H1 (cell line): ENCODE measurements at regions of chr17 and their contacts with region 1.

Region 1: DNA sequence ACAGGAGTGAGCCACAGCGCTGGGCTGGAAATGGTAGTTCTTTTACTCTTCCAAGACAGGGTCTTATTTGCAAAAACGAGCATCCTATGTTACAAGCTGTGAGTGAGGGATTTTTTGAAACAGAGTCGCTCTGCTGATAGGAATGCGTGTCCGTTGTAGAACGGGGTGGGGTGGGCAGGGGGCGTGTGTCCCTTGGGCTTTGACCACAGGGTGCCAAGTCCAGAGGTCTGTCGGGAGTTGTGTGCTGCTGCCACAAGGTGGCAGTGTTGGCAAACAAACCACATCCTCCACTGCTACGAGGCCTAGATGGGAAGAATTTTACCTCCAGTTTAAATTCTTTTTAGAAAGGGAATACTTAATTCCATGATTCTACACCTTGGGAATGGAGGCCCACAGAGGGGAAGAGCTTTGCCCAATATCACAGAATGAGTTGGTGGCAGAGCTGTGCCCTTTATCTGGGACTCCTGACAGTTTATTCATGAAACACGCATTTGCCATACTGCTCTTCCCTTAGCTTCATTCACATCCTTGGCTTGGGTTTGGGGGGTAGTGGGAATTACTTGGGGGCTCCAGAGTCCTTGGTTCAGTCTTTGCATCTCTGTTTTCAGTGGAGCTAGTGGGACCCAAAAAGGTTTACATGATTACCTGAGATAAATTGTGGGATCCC is 30.6 kb upstream of the ETV4 start:
- DNase-seq: peak; percentile 73 to 84
- H3K4me3 ChIP-seq: peak overlapping the region in 3 of 4 experiments; percentile 28 to 46 (median 37); a peak in 3 of 8 replicates
- H3K27ac ChIP-seq: no peak overlapping the region
- H3K4me1 ChIP-seq: peaks cover 6 to 21% (median 13%) of the 10 kb centered on the region in 4 experiments; a peak in 5 of 7 replicates
- H3K27me3 ChIP-seq: no peaks in the 10 kb centered on the region
- CTCF ChIP-seq: peak; percentile 86 to 97 (median 91)
- EP300 ChIP-seq: no peak
- POLR2A ChIP-seq: no peak
- RAD21 ChIP-seq: peak; percentile 99

Region 2: GRCh38 chr17:43530278-43531081 is 46.2 kb before region 1 on chr17:
- CTCF ChIA-PET with region 1: interaction called, 21 read pairs
- POLR2A ChIA-PET with region 1: interaction called, 7 read pairs
- DNase-seq: peak; percentile 93 to 99
- H3K4me3 ChIP-seq: peak overlapping the region; percentile 17 to 59 (median 40); a peak in 7 of 8 replicates
- H3K27ac ChIP-seq: peak overlapping the region; percentile 89
- H3K4me1 ChIP-seq: peaks cover 18 to 40% (median 22%) of the 10 kb centered on the region in 4 experiments
- H3K27me3 ChIP-seq: no peaks in the 10 kb centered on the region
- CTCF ChIP-seq: 0 out of 4 replicates have a peak, but pooled peaks of 1 of the 3 experiments have one; percentile 6
- EP300 ChIP-seq: peak in 1 of 2 experiments; percentile 94; a peak in 2 of 3 replicates
- POLR2A ChIP-seq: peak in 1 of 2 experiments; percentile 81; a peak in 2 of 3 replicates
- RAD21 ChIP-seq: peak; percentile 8 to 10; a peak in 1 of 4 replicates

Region 3: GRCh38 chr17:43556292-43556691 is 20.4 kb before region 1 on chr17:
- CTCF ChIA-PET with region 1: interaction called, 65 read pairs
- POLR2A ChIA-PET with region 1: interaction called, 3 read pairs
- DNase-seq: no peak
- H3K4me3 ChIP-seq: no peak overlapping the region
- H3K27ac ChIP-seq: no peak overlapping the region
- H3K4me1 ChIP-seq: peaks cover 5 to 20% (median 13%) of the 10 kb centered on the region in 4 experiments
- H3K27me3 ChIP-seq: no peaks in the 10 kb centered on the region; a peak in 2 of 7 replicates
- CTCF ChIP-seq: no peak
- EP300 ChIP-seq: no peak
- POLR2A ChIP-seq: no peak
- RAD21 ChIP-seq: no peak

Region 4: GRCh38 chr17:43591779-43592562 is 15.3 kb after region 1 on chr17:
- CTCF ChIA-PET with region 1: interaction called, 11 read pairs
- POLR2A ChIA-PET with region 1: interaction called, 3 read pairs
- DNase-seq: no peak
- H3K4me3 ChIP-seq: no peak overlapping the region
- H3K27ac ChIP-seq: no peak overlapping the region
- H3K4me1 ChIP-seq: peaks cover 0 to 4% (median 0%) of the 10 kb centered on the region in 4 experiments; a peak in 2 of 7 replicates
- H3K27me3 ChIP-seq: no peaks in the 10 kb centered on the region
- CTCF ChIP-seq: no peak
- EP300 ChIP-seq: no peak
- POLR2A ChIP-seq: no peak
- RAD21 ChIP-seq: no peak

Region 5: DNA sequence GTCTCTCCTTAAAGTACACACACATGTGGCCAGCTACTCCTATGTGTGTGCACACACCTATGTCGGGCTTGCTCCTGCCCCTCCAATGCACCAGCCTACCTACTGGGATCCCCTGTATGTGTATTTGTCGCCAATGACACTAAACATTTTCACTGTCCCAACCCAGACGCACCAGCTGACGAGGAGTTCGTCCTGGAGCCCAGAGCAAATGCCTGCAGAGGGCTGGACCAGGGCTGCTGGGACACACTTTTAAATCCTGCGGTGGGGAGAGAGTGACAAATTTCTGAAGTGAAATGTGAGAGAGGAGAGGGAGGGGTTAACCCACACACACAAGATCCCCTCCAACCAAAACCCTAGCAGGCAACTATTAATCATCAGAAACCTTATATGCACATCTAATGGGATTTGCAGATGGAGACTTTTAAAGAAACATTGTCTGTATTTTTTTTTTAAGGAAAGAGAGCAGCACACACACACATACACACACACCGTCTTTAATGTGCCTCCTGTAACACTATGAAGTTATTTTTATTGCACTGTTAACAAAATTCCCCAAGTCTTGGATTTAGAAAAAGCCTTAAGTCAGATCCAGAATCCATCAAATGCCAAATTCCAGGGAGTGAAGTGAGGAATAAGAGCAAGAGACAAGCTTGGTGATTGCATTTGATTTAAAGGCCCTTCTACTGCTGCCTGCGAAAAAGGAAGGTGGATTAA is 85.2 kb after region 1 on chr17 and contains the start of gene MEOX1:
- CTCF ChIA-PET with region 1: interaction called, 46 read pairs
- POLR2A ChIA-PET with region 1: interaction called, 8 read pairs
- DNase-seq: no peak
- H3K4me3 ChIP-seq: no peak within 1 kb of the TSS
- H3K27ac ChIP-seq: no peak within 1 kb of the TSS
- H3K4me1 ChIP-seq: peaks cover 3 to 26% (median 16%) of the 10 kb centered on the region in 4 experiments; a peak in 5 of 7 replicates
- H3K27me3 ChIP-seq: no peaks in the 10 kb centered on the region; a peak in 1 of 7 replicates
- CTCF ChIP-seq: no peak
- EP300 ChIP-seq: no peak
- POLR2A ChIP-seq: no peak
- RAD21 ChIP-seq: no peak
- total RNA-seq, gene MEOX1: not detected in 2 replicates

Region 6: DNA sequence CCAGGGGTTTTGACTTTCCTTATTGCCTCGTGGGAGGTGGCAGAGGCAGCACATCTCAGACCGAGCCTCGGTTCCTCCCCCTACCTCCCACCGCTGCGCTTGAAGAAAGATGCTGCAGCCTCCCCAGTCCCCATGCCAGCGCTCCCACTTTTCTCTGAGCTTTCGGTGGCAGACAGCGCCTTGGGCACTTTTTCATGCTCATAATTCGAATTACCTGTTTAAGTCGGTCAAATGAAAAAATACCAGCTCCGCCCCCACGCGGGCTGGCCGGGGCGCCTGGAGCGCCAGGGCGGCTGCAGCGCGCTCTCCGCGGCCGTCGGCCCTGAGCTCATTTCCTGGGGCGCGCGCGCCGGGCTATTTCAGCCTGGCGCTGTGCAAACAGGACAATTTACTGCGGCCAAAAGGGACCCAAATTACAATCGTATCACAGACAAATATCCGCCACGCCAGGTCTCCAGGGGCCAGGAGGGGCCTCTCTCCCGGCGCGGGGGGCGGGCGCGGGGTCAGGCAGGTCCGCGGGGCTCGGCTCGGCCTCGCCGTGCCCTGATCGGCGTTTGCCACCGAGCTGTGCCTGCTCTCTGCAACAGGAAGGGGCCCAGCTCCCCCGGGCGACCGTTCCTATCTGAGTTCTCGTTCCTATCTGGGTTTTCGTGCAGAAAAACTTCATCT is 136.9 kb after region 1 on chr17:
- CTCF ChIA-PET with region 1: interaction called, 11 read pairs
- POLR2A ChIA-PET with region 1: no interaction called
- DNase-seq: peak in 1 of 2 experiments; percentile 70
- H3K4me3 ChIP-seq: peak overlapping the region; percentile 47 to 72 (median 51); a peak in 7 of 8 replicates
- H3K27ac ChIP-seq: no peak overlapping the region
- H3K4me1 ChIP-seq: peaks cover 0 to 2% (median 0%) of the 10 kb centered on the region in 4 experiments; a peak in 2 of 7 replicates
- H3K27me3 ChIP-seq: peaks cover 10 to 28% (median 24%) of the 10 kb centered on the region in 4 experiments
- CTCF ChIP-seq: no peak
- EP300 ChIP-seq: no peak
- POLR2A ChIP-seq: no peak
- RAD21 ChIP-seq: no peak

Region 7: GRCh38 chr17:43846221-43846712 is 269.6 kb after region 1 on chr17:
- CTCF ChIA-PET with region 1: interaction called, 10 read pairs
- POLR2A ChIA-PET with region 1: no interaction called
- DNase-seq: peak; percentile 77 to 100
- H3K4me3 ChIP-seq: peak overlapping the region in 1 of 4 experiments; percentile 46; a peak in 1 of 8 replicates
- H3K27ac ChIP-seq: no peak overlapping the region
- H3K4me1 ChIP-seq: peaks cover 0 to 5% (median 1%) of the 10 kb centered on the region in 4 experiments; a peak in 2 of 7 replicates
- H3K27me3 ChIP-seq: peaks cover 0 to 3% (median 0%) of the 10 kb centered on the region in 4 experiments; a peak in 2 of 7 replicates
- CTCF ChIP-seq: peak; percentile 97 to 98 (median 97)
- EP300 ChIP-seq: no peak
- POLR2A ChIP-seq: no peak
- RAD21 ChIP-seq: peak; percentile 80 to 92